ENCODE measurements at regions of chr2 and their contacts with region 1.

Region 1: DNA sequence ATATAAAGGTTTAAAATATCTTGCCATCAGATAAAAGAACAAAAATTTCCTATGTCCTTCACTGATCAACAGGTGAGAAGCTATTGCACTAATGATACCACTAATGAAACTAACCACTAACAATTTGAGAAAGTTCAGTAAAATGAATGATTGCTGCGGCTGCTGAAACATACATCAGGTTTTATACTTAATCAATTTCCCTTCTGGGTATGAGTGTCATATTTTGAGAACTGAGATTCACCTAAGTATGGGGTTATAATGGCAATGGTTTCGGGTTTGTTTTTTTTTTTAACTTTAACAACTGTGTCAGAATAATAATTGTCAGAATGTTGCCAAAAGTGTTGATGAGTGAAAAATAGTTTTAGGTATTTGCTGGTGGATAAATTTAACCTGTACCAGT is 151.3 kb upstream of the SLC39A10 start:
- DNase-seq: peak; percentile 83
- ATAC-seq: peak; percentile 95
- H3K4me3 ChIP-seq: no peak overlapping the region
- H3K27ac ChIP-seq: no peak overlapping the region
- H3K4me1 ChIP-seq: peaks cover 3% of the 10 kb centered on the region; the same call in 1 of the 2 replicates
- H3K27me3 ChIP-seq: no peaks in the 10 kb centered on the region
- CTCF ChIP-seq: no peak
- EP300 ChIP-seq: peak; percentile 95 to 97
- POLR2A ChIP-seq: no peak
- RAD21 ChIP-seq: no peak

Region 2: DNA sequence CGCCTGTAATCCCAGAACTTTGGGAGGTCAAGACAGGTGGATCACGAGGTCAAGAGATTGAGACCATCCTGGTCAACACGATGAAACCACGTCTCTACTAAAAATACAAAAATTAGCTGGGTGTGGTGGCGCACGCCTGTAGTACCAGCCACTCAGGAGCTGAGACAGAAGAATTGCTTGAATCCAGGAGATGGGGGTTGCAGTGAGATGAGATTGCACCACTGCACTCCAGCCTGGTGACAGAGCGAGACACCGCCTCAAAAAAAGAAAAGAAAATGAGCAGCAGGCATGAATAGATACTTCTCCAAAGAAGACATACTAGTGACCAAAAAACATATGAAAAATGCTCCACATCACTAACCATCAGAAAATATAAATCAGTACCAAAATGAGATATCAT is 424.4 kb after region 1 on chr2:
- CTCF ChIA-PET with region 1: no interaction called
- POLR2A ChIA-PET with region 1: no interaction called
- RAD21 ChIA-PET with region 1: no interaction called
- SMC1A ChIA-PET with region 1: no interaction called
- in situ Hi-C with region 1: no loop called
- intact Hi-C with region 1: loop called (anchors 10 kb)
- DNase-seq: no peak
- ATAC-seq: no peak
- H3K4me3 ChIP-seq: no peak overlapping the region
- H3K27ac ChIP-seq: no peak overlapping the region
- H3K4me1 ChIP-seq: no peaks in the 10 kb centered on the region
- H3K27me3 ChIP-seq: no peaks in the 10 kb centered on the region
- CTCF ChIP-seq: no peak
- EP300 ChIP-seq: no peak
- POLR2A ChIP-seq: no peak
- RAD21 ChIP-seq: no peak